Adrenal gland (tissue), 19 donors: ENCODE measurements at regions of chr1 and their contacts with region 1.

Region 1: DNA sequence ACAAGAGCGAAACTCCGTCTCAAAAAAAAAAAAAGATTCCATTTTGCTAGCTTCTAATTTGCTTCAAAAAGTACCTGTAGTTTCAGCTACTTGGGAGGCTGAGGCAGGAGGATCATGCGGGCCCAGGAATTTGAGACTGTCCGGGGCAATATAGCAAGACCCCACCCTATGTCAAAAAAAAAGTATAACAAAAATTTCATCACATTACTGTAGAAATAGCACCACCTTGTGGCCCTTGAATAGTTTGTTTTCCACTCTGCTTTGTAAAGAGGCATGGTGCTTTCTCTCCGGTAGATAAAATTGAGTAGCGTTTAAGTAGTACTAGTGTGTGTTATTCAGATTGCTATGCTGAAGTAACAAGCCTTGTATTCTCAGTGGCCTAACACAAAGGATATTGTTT is 18.2 kb upstream of the MSTO1 start:
- DNase-seq: peak in 4 of 7 donors; percentile 18 to 34 (median 27)
- H3K4me3 ChIP-seq: no peak overlapping the region
- H3K27ac ChIP-seq: no peak overlapping the region
- H3K4me1 ChIP-seq: no peaks in the 10 kb centered on the region
- H3K27me3 ChIP-seq: no peaks in the 10 kb centered on the region
- CTCF ChIP-seq: peak; percentile 34 to 65 (median 54)
- POLR2A ChIP-seq: no peak

Region 2: GRCh38 chr1:155277070-155277895 is 314.5 kb before region 1 on chr1 and contains the start of gene HCN3:
- intact Hi-C with region 1: loop called in 1 of 2 experiments (anchors 10 kb)
- DNase-seq: peak; percentile 97 to 99 (median 99)
- H3K4me3 ChIP-seq: peak within 1 kb of the TSS; percentile 38 to 82 (median 66)
- H3K27ac ChIP-seq: peak within 1 kb of the TSS in 2 of 5 donors; percentile 60 to 73
- H3K4me1 ChIP-seq: peaks cover 16 to 21% of the 10 kb centered on the region in 2 donors
- H3K27me3 ChIP-seq: no peaks in the 10 kb centered on the region
- CTCF ChIP-seq: peak in 4 of 6 experiments; percentile 27 to 70 (median 62)
- POLR2A ChIP-seq: no peak
- total RNA-seq, gene HCN3: 1.0 to 6.5 (median 3.6) TPM

Region 3: GRCh38 chr1:155360051-155360450 is 231.7 kb before region 1 on chr1:
- intact Hi-C with region 1: loop called in 1 of 2 experiments (anchors 10 kb)
- DNase-seq: no peak
- H3K4me3 ChIP-seq: no peak overlapping the region
- H3K27ac ChIP-seq: no peak overlapping the region
- H3K4me1 ChIP-seq: no peaks in the 10 kb centered on the region
- H3K27me3 ChIP-seq: no peaks in the 10 kb centered on the region
- CTCF ChIP-seq: no peak
- POLR2A ChIP-seq: no peak